ENCODE measurements at regions of chr15 and their contacts with region 1.

Region 1: GRCh38 chr15:57079931-57080620 is 161.6 kb downstream of the TCF12 start:
- DNase-seq: no peak
- H3K4me3 ChIP-seq: no peak overlapping the region
- H3K27ac ChIP-seq: no peak overlapping the region
- H3K4me1 ChIP-seq: no peaks in the 10 kb centered on the region
- H3K27me3 ChIP-seq: no peaks in the 10 kb centered on the region
- CTCF ChIP-seq: no peak

Region 2: DNA sequence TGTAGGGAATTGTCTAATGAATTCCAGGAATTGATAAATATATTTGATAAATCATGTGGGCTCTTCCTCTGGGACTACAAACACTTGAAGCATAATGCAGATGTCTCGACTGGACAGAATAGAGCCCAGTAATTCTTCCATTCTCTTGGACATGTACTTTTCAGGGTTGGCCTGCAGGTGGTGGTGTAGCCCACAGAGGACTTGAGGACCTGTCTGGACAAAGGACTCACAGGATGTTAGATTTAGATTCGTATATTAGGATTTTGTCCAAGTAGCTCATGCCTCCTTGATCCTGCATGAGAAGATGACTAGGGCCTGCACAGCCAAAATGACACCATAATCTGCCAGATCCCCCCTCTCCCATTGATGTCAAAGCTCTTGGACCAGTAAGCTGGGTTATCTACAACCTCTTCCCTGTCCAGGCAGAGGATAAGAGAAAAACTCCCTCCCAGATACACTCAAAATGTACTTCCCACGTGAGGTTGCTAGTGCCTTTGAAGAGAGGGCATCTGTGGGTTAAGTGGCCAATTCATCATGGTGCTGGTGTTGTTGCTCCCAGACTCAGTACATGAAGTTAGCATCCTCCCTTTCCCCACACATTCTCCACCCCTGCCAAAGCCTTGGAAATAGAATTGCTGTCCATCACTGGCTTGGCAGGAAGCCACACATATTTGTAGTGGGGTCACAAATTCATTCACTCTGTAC is 258.2 kb before region 1 on chr15:
- CTCF ChIA-PET with region 1: no interaction called
- POLR2A ChIA-PET with region 1: no interaction called
- intact Hi-C with region 1: no loop called
- DNase-seq: peak; percentile 35 to 53
- H3K4me3 ChIP-seq: no peak overlapping the region
- H3K27ac ChIP-seq: no peak overlapping the region
- H3K4me1 ChIP-seq: peaks cover 8% of the 10 kb centered on the region; the same call in 1 of the 2 replicates
- H3K27me3 ChIP-seq: no peaks in the 10 kb centered on the region
- CTCF ChIP-seq: peak; percentile 74

Region 3: GRCh38 chr15:57045741-57046382 is 34.2 kb before region 1 on chr15:
- CTCF ChIA-PET with region 1: no interaction called
- POLR2A ChIA-PET with region 1: no interaction called
- intact Hi-C with region 1: no loop called
- DNase-seq: no peak
- H3K4me3 ChIP-seq: no peak overlapping the region
- H3K27ac ChIP-seq: no peak overlapping the region
- H3K4me1 ChIP-seq: no peaks in the 10 kb centered on the region
- H3K27me3 ChIP-seq: no peaks in the 10 kb centered on the region
- CTCF ChIP-seq: no peak

Region 4: GRCh38 chr15:57570994-57571393 is 490.9 kb after region 1 on chr15:
- CTCF ChIA-PET with region 1: no interaction called
- POLR2A ChIA-PET with region 1: interaction called, 16 read pairs
- intact Hi-C with region 1: no loop called
- DNase-seq: peak; percentile 23 to 90
- H3K4me3 ChIP-seq: no peak overlapping the region
- H3K27ac ChIP-seq: peak overlapping the region; percentile 97
- H3K4me1 ChIP-seq: peaks cover 26% of the 10 kb centered on the region
- H3K27me3 ChIP-seq: no peaks in the 10 kb centered on the region
- CTCF ChIP-seq: no peak

Region 5: GRCh38 chr15:57667171-57667849 is 587.2 kb after region 1 on chr15:
- CTCF ChIA-PET with region 1: interaction called, 11 read pairs
- POLR2A ChIA-PET with region 1: no interaction called
- intact Hi-C with region 1: no loop called
- DNase-seq: peak in 1 of 2 experiments; percentile 20
- H3K4me3 ChIP-seq: no peak overlapping the region
- H3K27ac ChIP-seq: no peak overlapping the region
- H3K4me1 ChIP-seq: no peaks in the 10 kb centered on the region
- H3K27me3 ChIP-seq: no peaks in the 10 kb centered on the region
- CTCF ChIP-seq: no peak

Measured in PC-9 (cell line).